Aorta (tissue), 5 donors: ENCODE measurements at regions of chr6 and their contacts with region 1.

Region 1: DNA sequence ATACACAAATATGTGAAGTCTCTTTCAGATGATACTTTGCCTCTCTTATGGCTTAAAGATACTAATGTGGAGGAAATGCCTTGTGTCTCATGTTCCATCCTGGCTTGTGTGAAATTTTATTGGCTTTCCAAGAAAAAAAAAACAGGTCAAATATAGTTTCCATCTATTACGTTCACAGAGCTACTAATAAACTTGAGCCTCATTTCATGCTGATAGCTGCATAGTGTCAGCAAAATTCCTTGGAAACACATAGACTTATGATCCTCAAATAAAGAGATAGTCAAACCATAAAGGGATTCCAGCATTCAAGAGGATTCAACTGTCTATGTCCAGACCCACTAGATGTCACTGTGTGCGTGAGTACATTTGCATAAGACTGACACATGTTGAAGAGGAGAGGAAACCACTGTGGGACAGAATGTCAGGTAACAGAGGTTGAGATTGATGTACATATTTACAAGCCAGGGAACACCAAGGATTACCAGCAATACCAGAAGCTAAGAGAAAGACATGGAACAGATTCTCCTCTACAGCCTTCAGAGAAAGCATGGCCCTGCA is 266.6 kb downstream of the COL12A1 start:
- DNase-seq: no peak
- ATAC-seq: no peak
- H3K4me3 ChIP-seq: no peak overlapping the region
- H3K27ac ChIP-seq: no peak overlapping the region
- H3K4me1 ChIP-seq: no peaks in the 10 kb centered on the region
- H3K27me3 ChIP-seq: no peaks in the 10 kb centered on the region

Region 2: GRCh38 chr6:74606581-74607071 is 332.6 kb before region 1 on chr6:
- intact Hi-C with region 1: loop called in 1 of 2 experiments (anchors 10 kb)
- DNase-seq: no peak
- ATAC-seq: peak; percentile 89
- H3K4me3 ChIP-seq: no peak overlapping the region
- H3K27ac ChIP-seq: no peak overlapping the region
- H3K4me1 ChIP-seq: peaks cover 2 to 6% of the 10 kb centered on the region in 2 donors
- H3K27me3 ChIP-seq: peaks cover 0 to 2% of the 10 kb centered on the region in 2 donors

Region 3: DNA sequence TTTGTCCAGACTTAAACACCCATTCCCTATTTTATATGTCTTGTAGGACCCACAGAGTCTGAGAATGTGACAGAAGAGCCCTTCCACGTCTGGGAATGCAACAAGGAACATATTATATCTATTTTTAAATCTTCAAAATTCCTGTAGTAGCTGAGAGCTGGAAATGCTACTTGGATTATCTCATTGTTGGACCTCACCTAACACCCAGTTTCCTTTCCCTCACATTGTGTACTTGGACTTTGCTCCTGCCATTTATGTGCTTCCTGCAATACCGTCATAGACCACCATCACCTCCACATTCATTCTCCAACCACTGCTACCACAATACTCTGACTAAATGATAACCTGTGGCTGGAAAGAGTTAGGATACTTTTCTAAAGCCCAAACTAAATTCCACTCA is 68.8 kb before region 1 on chr6:
- intact Hi-C with region 1: loop called in 1 of 2 experiments (anchors 10 kb)
- DNase-seq: no peak
- ATAC-seq: no peak
- H3K4me3 ChIP-seq: no peak overlapping the region
- H3K27ac ChIP-seq: no peak overlapping the region
- H3K4me1 ChIP-seq: peaks cover 0 to 2% of the 10 kb centered on the region in 2 donors
- H3K27me3 ChIP-seq: no peaks in the 10 kb centered on the region

Region 4: DNA sequence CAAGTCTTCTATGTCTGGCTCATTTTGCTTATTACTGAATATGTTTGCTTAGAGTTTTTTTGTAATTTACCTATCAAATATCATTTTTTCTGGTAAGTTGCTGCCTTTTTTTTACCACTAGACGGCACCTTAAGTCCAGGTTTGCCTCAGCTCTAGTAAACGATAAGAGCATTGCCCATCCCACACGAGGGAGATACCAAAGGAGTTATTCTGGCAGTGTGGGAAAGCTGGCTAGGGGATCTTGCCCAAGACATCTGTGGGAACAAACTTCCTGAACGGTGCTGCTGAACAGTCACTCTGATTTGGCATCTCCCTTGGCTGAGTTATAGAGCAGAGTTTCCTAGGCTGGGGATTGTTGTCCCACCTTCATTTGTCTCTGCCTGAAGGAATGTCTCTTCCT is 39.8 kb before region 1 on chr6:
- intact Hi-C with region 1: no loop called
- DNase-seq: no peak
- ATAC-seq: no peak
- H3K4me3 ChIP-seq: no peak overlapping the region
- H3K27ac ChIP-seq: no peak overlapping the region
- H3K4me1 ChIP-seq: peaks cover 0 to 2% of the 10 kb centered on the region in 2 donors
- H3K27me3 ChIP-seq: no peaks in the 10 kb centered on the region

Region 5: GRCh38 chr6:74971633-74972032 is 32.4 kb after region 1 on chr6:
- intact Hi-C with region 1: no loop called
- DNase-seq: no peak
- ATAC-seq: no peak
- H3K4me3 ChIP-seq: no peak overlapping the region
- H3K27ac ChIP-seq: no peak overlapping the region
- H3K4me1 ChIP-seq: no peaks in the 10 kb centered on the region
- H3K27me3 ChIP-seq: no peaks in the 10 kb centered on the region

Region 6: GRCh38 chr6:75052491-75052890 is 113.3 kb after region 1 on chr6:
- intact Hi-C with region 1: no loop called
- DNase-seq: no peak
- ATAC-seq: no peak
- H3K4me3 ChIP-seq: no peak overlapping the region
- H3K27ac ChIP-seq: no peak overlapping the region
- H3K4me1 ChIP-seq: no peaks in the 10 kb centered on the region
- H3K27me3 ChIP-seq: no peaks in the 10 kb centered on the region

Region 7: GRCh38 chr6:75098709-75099108 is 159.5 kb after region 1 on chr6:
- intact Hi-C with region 1: loop called in 1 of 2 experiments (anchors 10 kb)
- DNase-seq: peak in 1 of 2 donors; percentile 68
- ATAC-seq: peak; percentile 92
- H3K4me3 ChIP-seq: no peak overlapping the region
- H3K27ac ChIP-seq: peak overlapping the region in 1 of 2 donors; percentile 25
- H3K4me1 ChIP-seq: peaks cover 2 to 4% of the 10 kb centered on the region in 2 donors
- H3K27me3 ChIP-seq: no peaks in the 10 kb centered on the region

Region 8: DNA sequence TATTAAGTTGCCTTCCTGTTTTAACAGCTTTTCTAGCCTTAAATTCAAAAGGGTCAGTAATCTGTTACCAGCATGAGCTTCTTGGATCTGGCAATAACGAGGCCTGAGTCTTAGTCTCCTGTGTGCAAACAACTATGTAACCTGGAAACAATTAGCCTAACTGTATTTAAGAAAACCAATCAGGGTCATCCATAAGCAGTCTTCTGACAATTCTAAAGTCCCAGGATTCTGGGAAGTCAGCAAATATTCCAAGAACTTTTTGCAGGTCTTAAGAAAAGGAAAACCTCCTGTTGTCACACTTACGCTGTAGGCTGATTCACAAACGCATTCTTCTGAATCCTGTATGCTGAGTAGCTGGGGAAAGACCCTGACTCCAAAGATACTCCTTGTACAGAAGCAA is 176.3 kb after region 1 on chr6:
- intact Hi-C with region 1: loop called in 1 of 2 experiments (anchors 10 kb)
- DNase-seq: no peak
- ATAC-seq: no peak
- H3K4me3 ChIP-seq: peak overlapping the region in 1 of 2 donors; percentile 26
- H3K27ac ChIP-seq: no peak overlapping the region
- H3K4me1 ChIP-seq: peaks cover 0 to 3% of the 10 kb centered on the region in 2 donors
- H3K27me3 ChIP-seq: no peaks in the 10 kb centered on the region